ENCODE measurements at regions of chr12 and their contacts with region 1.

Region 1: GRCh38 chr12:11862798-11863197 is 207.9 kb upstream of the BCL2L14 start:
- DNase-seq: peak; percentile 69
- H3K4me3 ChIP-seq: no peak overlapping the region
- H3K27ac ChIP-seq: peak overlapping the region; percentile 98
- H3K4me1 ChIP-seq: peaks cover 42% of the 10 kb centered on the region
- H3K27me3 ChIP-seq: no peaks in the 10 kb centered on the region
- CTCF ChIP-seq: no peak
- POLR2A ChIP-seq: no peak

Region 2: GRCh38 chr12:11812586-11813427 is 50.0 kb before region 1 on chr12:
- CTCF ChIA-PET with region 1: no interaction called
- POLR2A ChIA-PET with region 1: no interaction called
- dilution Hi-C with region 1: no loop called
- intact Hi-C with region 1: loop called (anchors 2 kb)
- DNase-seq: peak; percentile 59
- H3K4me3 ChIP-seq: peak overlapping the region in 1 of 3 experiments; percentile 29
- H3K27ac ChIP-seq: peak overlapping the region; percentile 77
- H3K4me1 ChIP-seq: peaks cover 35% of the 10 kb centered on the region
- H3K27me3 ChIP-seq: no peaks in the 10 kb centered on the region
- CTCF ChIP-seq: peak in 1 of 2 donors; percentile 40
- POLR2A ChIP-seq: peak; percentile 46

Region 3: GRCh38 chr12:11836282-11837151 is 26.3 kb before region 1 on chr12:
- CTCF ChIA-PET with region 1: no interaction called
- POLR2A ChIA-PET with region 1: no interaction called
- dilution Hi-C with region 1: no loop called
- intact Hi-C with region 1: loop called (anchors 1 kb)
- DNase-seq: no peak
- H3K4me3 ChIP-seq: no peak overlapping the region
- H3K27ac ChIP-seq: no peak overlapping the region
- H3K4me1 ChIP-seq: peaks cover 49% of the 10 kb centered on the region
- H3K27me3 ChIP-seq: no peaks in the 10 kb centered on the region
- CTCF ChIP-seq: no peak
- POLR2A ChIP-seq: no peak

Region 4: GRCh38 chr12:11877869-11878780 is 15.3 kb after region 1 on chr12:
- CTCF ChIA-PET with region 1: interaction called, 4 read pairs
- POLR2A ChIA-PET with region 1: no interaction called
- dilution Hi-C with region 1: no loop called
- intact Hi-C with region 1: loop called (anchors 1 kb)
- DNase-seq: peak; percentile 84
- H3K4me3 ChIP-seq: no peak overlapping the region
- H3K27ac ChIP-seq: peak overlapping the region; percentile 42
- H3K4me1 ChIP-seq: peaks cover 58% of the 10 kb centered on the region
- H3K27me3 ChIP-seq: no peaks in the 10 kb centered on the region
- CTCF ChIP-seq: no peak
- POLR2A ChIP-seq: no peak

Region 5: GRCh38 chr12:12054993-12055392 is 192.2 kb after region 1 on chr12:
- CTCF ChIA-PET with region 1: no interaction called
- POLR2A ChIA-PET with region 1: no interaction called
- dilution Hi-C with region 1: no loop called
- intact Hi-C with region 1: no loop called
- DNase-seq: no peak
- H3K4me3 ChIP-seq: no peak overlapping the region
- H3K27ac ChIP-seq: no peak overlapping the region
- H3K4me1 ChIP-seq: no peaks in the 10 kb centered on the region
- H3K27me3 ChIP-seq: peaks cover 3 to 4% of the 10 kb centered on the region in 2 experiments
- CTCF ChIP-seq: no peak
- POLR2A ChIP-seq: no peak

Measured in endothelial cell of umbilical vein (primary cell).